Activated CD4-positive, alpha-beta memory T cell treated with anti-CD3 and anti-CD28 coated beads for 36 hours (primary cell): ENCODE measurements at regions of chr4 and their contacts with region 1.

Region 1: GRCh38 chr4:36414248-36414647 is 132.8 kb downstream of the DTHD1 start:
- DNase-seq: no peak
- H3K4me3 Mint-ChIP-seq: no peak overlapping the region
- H3K27ac Mint-ChIP-seq: no peak overlapping the region
- H3K4me1 Mint-ChIP-seq: no peaks in the 10 kb centered on the region
- H3K27me3 Mint-ChIP-seq: peaks cover 29% of the 10 kb centered on the region

Region 2: GRCh38 chr4:36614011-36614410 is 199.8 kb after region 1 on chr4:
- CTCF ChIA-PET with region 1: no interaction called
- POLR2A ChIA-PET with region 1: no interaction called
- intact Hi-C with region 1: no loop called
- DNase-seq: no peak
- H3K4me3 Mint-ChIP-seq: no peak overlapping the region
- H3K27ac Mint-ChIP-seq: no peak overlapping the region
- H3K4me1 Mint-ChIP-seq: no peaks in the 10 kb centered on the region
- H3K27me3 Mint-ChIP-seq: no peaks in the 10 kb centered on the region

Region 3: DNA sequence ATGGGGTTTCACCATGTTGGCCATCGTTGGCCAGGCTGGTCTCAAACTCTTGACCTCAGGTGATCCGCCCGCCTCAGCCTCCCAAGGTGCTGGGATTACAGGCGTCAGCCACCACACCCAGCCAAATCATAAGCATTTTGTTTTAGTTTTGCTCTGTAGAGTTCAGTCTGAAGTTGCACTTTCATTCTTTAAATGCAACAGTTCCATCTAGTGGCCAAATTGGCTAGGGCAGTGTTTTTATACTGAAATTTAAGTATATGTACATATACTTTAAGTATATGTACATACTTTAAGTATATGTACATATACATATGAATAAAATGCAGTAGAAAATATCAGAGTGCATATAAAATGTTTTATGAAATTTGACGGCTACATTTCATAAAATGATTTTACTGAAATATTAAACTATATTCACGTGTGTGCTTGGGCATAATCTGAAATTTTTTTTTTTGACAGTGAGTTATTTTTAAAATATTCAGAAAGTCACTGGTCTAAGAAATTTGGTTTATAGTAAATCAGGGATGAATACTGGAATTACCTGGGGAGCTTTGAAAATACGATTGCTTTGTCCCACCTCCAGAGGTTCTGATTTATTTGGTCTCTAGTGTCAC is 975.8 kb after region 1 on chr4:
- CTCF ChIA-PET with region 1: interaction called, 4 read pairs
- POLR2A ChIA-PET with region 1: no interaction called
- intact Hi-C with region 1: loop called (anchors 5 kb)
- DNase-seq: no peak
- H3K4me3 Mint-ChIP-seq: no peak overlapping the region
- H3K27ac Mint-ChIP-seq: no peak overlapping the region
- H3K4me1 Mint-ChIP-seq: no peaks in the 10 kb centered on the region
- H3K27me3 Mint-ChIP-seq: peaks cover 5% of the 10 kb centered on the region